Common myeloid progenitor, CD34-positive (primary cell): ENCODE measurements at regions of chr2 and their contacts with region 1.

Region 1: DNA sequence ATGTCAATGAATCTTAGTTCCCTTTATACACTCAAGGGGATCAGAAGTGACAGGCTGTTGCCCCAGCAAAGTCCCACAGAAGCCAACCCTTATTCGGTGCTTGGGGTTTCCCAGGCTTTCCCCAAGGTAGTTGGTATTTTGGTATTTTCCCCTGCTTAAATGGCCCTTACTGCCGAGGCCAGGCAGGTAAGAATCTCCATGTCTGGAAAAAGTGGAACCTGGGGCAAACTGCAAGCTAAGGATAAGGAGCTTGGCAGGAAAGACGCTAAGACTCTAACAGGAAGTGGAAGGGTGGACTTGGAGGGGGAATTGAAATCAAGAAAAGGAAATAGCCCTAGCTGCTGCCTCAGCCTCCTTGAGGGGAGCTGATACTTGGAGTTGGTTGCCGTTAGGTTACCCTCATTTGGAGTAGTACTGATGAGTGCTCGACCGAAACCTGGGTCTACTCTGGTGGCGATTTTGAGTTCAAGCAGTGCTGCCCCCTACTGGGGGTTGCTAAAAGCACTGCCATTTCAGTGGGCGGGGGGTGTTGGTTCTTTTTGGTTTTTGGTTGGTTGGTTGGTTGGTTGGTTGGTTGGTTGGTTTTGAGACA is 3.3 kb upstream of the GPBAR1 start:
- DNase-seq: peak; percentile 77 to 89 (median 87)
- H3K4me3 ChIP-seq: peak overlapping the region in 4 of 7 experiments; percentile 27 to 64 (median 49)
- H3K27ac ChIP-seq: peak overlapping the region in 1 of 2 experiments; percentile 38
- H3K4me1 ChIP-seq: peaks cover 0 to 21% (median 18%) of the 10 kb centered on the region in 4 experiments
- H3K27me3 ChIP-seq: no peaks in the 10 kb centered on the region

Region 2: DNA sequence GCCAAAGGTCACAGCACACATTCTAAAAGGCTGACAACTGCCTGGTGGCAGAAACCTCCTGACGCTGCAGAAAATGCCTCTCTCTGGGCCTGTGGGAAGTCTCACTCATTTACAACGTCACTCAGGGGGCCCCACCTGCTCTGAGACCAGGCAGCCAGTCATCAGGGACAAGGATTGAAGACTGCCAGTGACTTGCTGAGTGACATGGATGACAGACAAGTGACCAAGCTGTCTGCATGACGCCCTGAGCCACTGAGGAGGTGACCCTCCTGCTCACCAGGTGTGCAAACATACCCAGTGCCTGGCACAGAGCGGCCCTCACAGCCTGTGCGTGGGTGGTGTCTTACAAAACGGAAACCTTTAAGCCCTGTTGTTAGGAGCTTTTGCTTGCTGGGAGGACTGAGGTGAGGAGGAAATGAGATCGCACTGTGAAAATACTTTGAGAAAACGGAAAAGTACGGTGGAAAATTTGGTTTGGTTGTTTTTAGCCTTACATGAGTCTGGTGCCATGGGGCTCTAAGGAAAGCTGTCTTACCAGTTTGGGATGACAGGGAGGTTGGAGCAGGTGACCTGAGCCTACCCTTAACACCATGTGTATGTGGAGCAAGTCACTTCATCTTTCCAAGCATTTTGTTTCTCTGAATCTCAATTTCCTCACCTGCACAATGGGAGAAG is 646.9 kb before region 1 on chr2:
- CTCF ChIA-PET with region 1: no interaction called
- POLR2A ChIA-PET with region 1: no interaction called
- DNase-seq: peak in 2 of 3 donors; percentile 21 to 40
- H3K4me3 ChIP-seq: no peak overlapping the region
- H3K27ac ChIP-seq: no peak overlapping the region
- H3K4me1 ChIP-seq: peaks cover 0 to 16% (median 1%) of the 10 kb centered on the region in 4 experiments
- H3K27me3 ChIP-seq: no peaks in the 10 kb centered on the region

Region 3: GRCh38 chr2:218036361-218036760 is 221.1 kb before region 1 on chr2:
- CTCF ChIA-PET with region 1: no interaction called
- POLR2A ChIA-PET with region 1: no interaction called
- DNase-seq: peak in 2 of 3 donors; percentile 37 to 42
- H3K4me3 ChIP-seq: no peak overlapping the region
- H3K27ac ChIP-seq: no peak overlapping the region
- H3K4me1 ChIP-seq: peaks cover 0 to 15% (median 13%) of the 10 kb centered on the region in 4 experiments
- H3K27me3 ChIP-seq: peaks cover 0 to 1% (median 0%) of the 10 kb centered on the region in 5 experiments

Region 4: GRCh38 chr2:218186355-218186766 is 71.1 kb before region 1 on chr2:
- CTCF ChIA-PET with region 1: interaction called, 38 read pairs
- POLR2A ChIA-PET with region 1: no interaction called
- DNase-seq: peak; percentile 80 to 84 (median 82)
- H3K4me3 ChIP-seq: peak overlapping the region in 2 of 7 experiments; percentile 16 to 27
- H3K27ac ChIP-seq: no peak overlapping the region
- H3K4me1 ChIP-seq: peaks cover 0 to 8% (median 6%) of the 10 kb centered on the region in 4 experiments
- H3K27me3 ChIP-seq: peaks cover 0 to 4% (median 0%) of the 10 kb centered on the region in 5 experiments